Naive thymus-derived CD4-positive, alpha-beta T cell (primary cell): ENCODE measurements at regions of chr7 and their contacts with region 1.

Region 1: GRCh38 chr7:100563809-100564400 is 9.8 kb downstream of the SAP25 start:
- DNase-seq: peak; percentile 65 to 89 (median 77)
- ATAC-seq: peak; percentile 82
- H3K4me3 ChIP-seq: no peak overlapping the region
- H3K4me3 Mint-ChIP-seq: no peak overlapping the region
- H3K27ac ChIP-seq: no peak overlapping the region
- H3K27ac Mint-ChIP-seq: peak overlapping the region in 6 of 9 donors; percentile 9 to 76 (median 48)
- H3K4me1 ChIP-seq: peaks cover 8 to 22% of the 10 kb centered on the region in 2 donors
- H3K4me1 Mint-ChIP-seq: peaks cover 13 to 37% (median 28%) of the 10 kb centered on the region in 7 donors
- H3K27me3 ChIP-seq: no peaks in the 10 kb centered on the region
- H3K27me3 Mint-ChIP-seq: no peaks in the 10 kb centered on the region

Region 2: GRCh38 chr7:100469227-100470044 is 94.5 kb before region 1 on chr7:
- CTCF ChIA-PET with region 1: interaction called, 41 read pairs
- POLR2A ChIA-PET with region 1: interaction called, 4 read pairs
- intact Hi-C with region 1: loop called (anchors 1 kb)
- DNase-seq: peak; percentile 55 to 87 (median 75)
- ATAC-seq: peak; percentile 94
- H3K4me3 ChIP-seq: no peak overlapping the region
- H3K4me3 Mint-ChIP-seq: peak overlapping the region in 1 of 10 donors; percentile 41
- H3K27ac ChIP-seq: peak overlapping the region; percentile 3
- H3K27ac Mint-ChIP-seq: peak overlapping the region in 6 of 9 donors; percentile 22 to 85 (median 65)
- H3K4me1 ChIP-seq: peaks cover 16 to 23% of the 10 kb centered on the region in 2 donors
- H3K4me1 Mint-ChIP-seq: peaks cover 26 to 45% (median 29%) of the 10 kb centered on the region in 7 donors
- H3K27me3 ChIP-seq: no peaks in the 10 kb centered on the region
- H3K27me3 Mint-ChIP-seq: no peaks in the 10 kb centered on the region

Region 3: GRCh38 chr7:100516135-100516812 is 47.6 kb before region 1 on chr7:
- CTCF ChIA-PET with region 1: interaction called, 13 read pairs
- POLR2A ChIA-PET with region 1: no interaction called
- intact Hi-C with region 1: loop called in 1 of 2 experiments (anchors 1 kb)
- DNase-seq: peak in 7 of 9 donors; percentile 34 to 70 (median 55)
- ATAC-seq: peak; percentile 89
- H3K4me3 ChIP-seq: peak overlapping the region; percentile 41
- H3K4me3 Mint-ChIP-seq: peak overlapping the region; percentile 51 to 79 (median 74)
- H3K27ac ChIP-seq: peak overlapping the region; percentile 52
- H3K27ac Mint-ChIP-seq: peak overlapping the region; percentile 38 to 92 (median 81)
- H3K4me1 ChIP-seq: peaks cover 23 to 29% of the 10 kb centered on the region in 2 donors
- H3K4me1 Mint-ChIP-seq: peaks cover 23 to 55% (median 33%) of the 10 kb centered on the region in 7 donors
- H3K27me3 ChIP-seq: no peaks in the 10 kb centered on the region
- H3K27me3 Mint-ChIP-seq: peaks cover 0 to 3% (median 0%) of the 10 kb centered on the region in 5 donors

Region 4: GRCh38 chr7:100545360-100546128 is 18.4 kb before region 1 on chr7:
- CTCF ChIA-PET with region 1: interaction called, 33 read pairs
- POLR2A ChIA-PET with region 1: interaction called, 17 read pairs
- intact Hi-C with region 1: loop called in 1 of 2 experiments (anchors 1 kb)
- DNase-seq: peak in 2 of 9 donors; percentile 34 to 60
- ATAC-seq: peak; percentile 55
- H3K4me3 ChIP-seq: peak overlapping the region; percentile 7
- H3K4me3 Mint-ChIP-seq: peak overlapping the region; percentile 45 to 82 (median 68)
- H3K27ac ChIP-seq: peak overlapping the region; percentile 56
- H3K27ac Mint-ChIP-seq: peak overlapping the region; percentile 77 to 95 (median 88)
- H3K4me1 ChIP-seq: peaks cover 69 to 91% of the 10 kb centered on the region in 2 donors
- H3K4me1 Mint-ChIP-seq: peaks cover 74 to 100% (median 92%) of the 10 kb centered on the region in 7 donors
- H3K27me3 ChIP-seq: no peaks in the 10 kb centered on the region
- H3K27me3 Mint-ChIP-seq: no peaks in the 10 kb centered on the region

Region 5: GRCh38 chr7:100626530-100627237 is 62.8 kb after region 1 on chr7:
- CTCF ChIA-PET with region 1: no interaction called
- POLR2A ChIA-PET with region 1: no interaction called
- intact Hi-C with region 1: loop called in 1 of 2 experiments (anchors 2 kb)
- DNase-seq: peak; percentile 56 to 88 (median 81)
- ATAC-seq: peak; percentile 99
- H3K4me3 ChIP-seq: peak overlapping the region; percentile 58
- H3K4me3 Mint-ChIP-seq: peak overlapping the region; percentile 60 to 87 (median 76)
- H3K27ac ChIP-seq: peak overlapping the region; percentile 84
- H3K27ac Mint-ChIP-seq: peak overlapping the region; percentile 49 to 88 (median 75)
- H3K4me1 ChIP-seq: peaks cover 14 to 18% of the 10 kb centered on the region in 2 donors
- H3K4me1 Mint-ChIP-seq: peaks cover 26 to 58% (median 43%) of the 10 kb centered on the region in 7 donors
- H3K27me3 ChIP-seq: peaks cover 0 to 4% of the 10 kb centered on the region in 2 donors
- H3K27me3 Mint-ChIP-seq: no peaks in the 10 kb centered on the region

Region 6: DNA sequence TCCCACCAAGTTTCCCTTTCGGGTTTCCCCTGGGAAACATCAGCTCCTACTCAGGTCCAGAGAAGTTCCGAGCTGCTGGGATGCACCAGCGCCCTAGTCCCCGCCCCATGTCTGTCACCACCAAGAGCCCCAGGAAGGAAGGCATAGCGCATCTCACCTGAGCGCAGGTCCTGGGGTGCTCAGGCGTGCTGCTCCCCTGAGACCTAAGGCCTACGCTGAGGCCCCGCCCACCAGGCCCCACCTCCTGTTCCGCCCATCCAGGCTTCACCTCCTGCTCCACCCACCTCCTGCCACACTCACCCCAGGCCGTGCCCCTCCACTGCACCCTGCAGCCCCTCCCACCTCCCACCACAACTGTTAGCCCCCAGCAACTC is 78.6 kb after region 1 on chr7:
- CTCF ChIA-PET with region 1: no interaction called
- POLR2A ChIA-PET with region 1: no interaction called
- intact Hi-C with region 1: no loop called
- DNase-seq: no peak
- ATAC-seq: peak; percentile 56
- H3K4me3 ChIP-seq: no peak overlapping the region
- H3K4me3 Mint-ChIP-seq: no peak overlapping the region
- H3K27ac ChIP-seq: no peak overlapping the region
- H3K27ac Mint-ChIP-seq: no peak overlapping the region
- H3K4me1 ChIP-seq: no peaks in the 10 kb centered on the region
- H3K4me1 Mint-ChIP-seq: peaks cover 0 to 2% (median 0%) of the 10 kb centered on the region in 7 donors
- H3K27me3 ChIP-seq: no peaks in the 10 kb centered on the region
- H3K27me3 Mint-ChIP-seq: peaks cover 0 to 9% (median 4%) of the 10 kb centered on the region in 5 donors

Region 7: DNA sequence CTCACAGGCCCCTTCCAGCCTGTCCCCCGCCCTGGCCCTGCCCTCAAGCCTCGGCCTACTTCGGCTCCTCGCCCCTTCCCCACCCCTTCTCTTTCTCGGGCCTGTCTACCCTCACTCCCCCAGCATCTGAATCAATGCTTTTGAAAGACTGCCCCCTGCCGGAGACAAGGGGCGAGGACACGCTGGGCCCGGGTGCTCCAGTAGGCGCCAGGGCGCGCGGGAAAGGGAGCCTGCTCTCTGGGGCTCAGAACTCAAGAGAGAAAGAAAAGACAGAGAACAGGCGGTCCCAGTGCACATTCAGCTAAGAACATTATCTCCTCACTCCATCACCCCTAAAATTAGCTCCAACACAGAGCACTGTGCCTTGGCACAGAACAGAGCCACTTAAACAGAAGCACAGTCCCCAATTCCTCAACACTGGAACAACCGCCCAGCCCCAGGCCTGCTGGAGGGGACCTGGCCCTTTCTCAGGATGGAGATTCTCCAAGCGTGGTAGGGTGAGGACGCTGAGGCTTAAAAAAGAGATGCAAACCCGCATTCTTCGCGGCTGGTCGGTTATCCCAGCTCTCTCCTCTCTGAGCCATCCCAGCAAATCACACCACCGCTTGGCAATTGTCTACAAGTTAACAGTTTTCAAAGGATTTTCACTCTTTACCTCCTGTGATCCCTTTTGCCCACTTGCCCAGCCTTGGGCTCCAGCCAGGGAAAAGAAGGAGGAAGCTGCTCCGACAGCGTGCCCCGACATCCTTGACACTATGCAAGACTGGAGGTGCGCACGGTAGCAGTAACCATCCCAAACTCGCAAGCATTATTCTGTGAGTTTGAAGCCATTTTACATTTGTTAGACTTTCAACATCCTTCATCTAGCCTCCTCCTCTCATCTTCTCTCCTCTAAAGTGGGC is 128.0 kb after region 1 on chr7:
- CTCF ChIA-PET with region 1: interaction called, 18 read pairs
- POLR2A ChIA-PET with region 1: interaction called, 11 read pairs
- intact Hi-C with region 1: loop called in 1 of 2 experiments (anchors 1 kb)
- DNase-seq: peak; percentile 64 to 85 (median 78)
- ATAC-seq: peak; percentile 79
- H3K4me3 ChIP-seq: peak overlapping the region; percentile 67
- H3K4me3 Mint-ChIP-seq: peak overlapping the region; percentile 92 to 100 (median 94)
- H3K27ac ChIP-seq: peak overlapping the region; percentile 73
- H3K27ac Mint-ChIP-seq: peak overlapping the region; percentile 62 to 96 (median 95)
- H3K4me1 ChIP-seq: peaks cover 23 to 27% of the 10 kb centered on the region in 2 donors
- H3K4me1 Mint-ChIP-seq: peaks cover 29 to 54% (median 41%) of the 10 kb centered on the region in 7 donors
- H3K27me3 ChIP-seq: no peaks in the 10 kb centered on the region
- H3K27me3 Mint-ChIP-seq: peaks cover 0 to 16% (median 0%) of the 10 kb centered on the region in 5 donors

Region 8: GRCh38 chr7:100852048-100852872 is 288.4 kb after region 1 on chr7 and contains the start of gene SLC12A9:
- CTCF ChIA-PET with region 1: no interaction called
- POLR2A ChIA-PET with region 1: no interaction called
- intact Hi-C with region 1: loop called in 1 of 2 experiments (anchors 1 kb)
- DNase-seq: peak; percentile 71 to 90 (median 85)
- ATAC-seq: peak; percentile 96
- H3K4me3 ChIP-seq: peak within 1 kb of the TSS; percentile 73
- H3K4me3 Mint-ChIP-seq: peak within 1 kb of the TSS; percentile 89 to 95 (median 92)
- H3K27ac ChIP-seq: peak within 1 kb of the TSS; percentile 76
- H3K27ac Mint-ChIP-seq: peak within 1 kb of the TSS; percentile 71 to 97 (median 90)
- H3K4me1 ChIP-seq: peaks cover 8 to 16% of the 10 kb centered on the region in 2 donors
- H3K4me1 Mint-ChIP-seq: peaks cover 0 to 31% (median 19%) of the 10 kb centered on the region in 7 donors
- H3K27me3 ChIP-seq: no peaks in the 10 kb centered on the region
- H3K27me3 Mint-ChIP-seq: no peaks in the 10 kb centered on the region
- total RNA-seq, gene SLC12A9: 50.4 to 78.6 (median 62.7) TPM